Left cardiac atrium (tissue), 4 donors: ENCODE measurements at regions of chr19 and their contacts with region 1.

Region 1: GRCh38 chr19:54325194-54325621 is 12.2 kb upstream of the LILRA5 start:
- DNase-seq: no peak
- ATAC-seq: peak in 1 of 2 donors; percentile 39

Region 2: GRCh38 chr19:54179921-54180461 is 145.2 kb before region 1 on chr19:
- intact Hi-C with region 1: no loop called
- DNase-seq: no peak
- ATAC-seq: peak in 1 of 2 donors; percentile 14

Region 3: GRCh38 chr19:54281007-54281728 is 44.0 kb before region 1 on chr19 and contains the start of gene LILRB2:
- intact Hi-C with region 1: no loop called
- DNase-seq: no peak
- ATAC-seq: peak in 1 of 2 donors; percentile 34
- total RNA-seq, gene LILRB2: 3.3 to 5.5 TPM

Region 4: DNA sequence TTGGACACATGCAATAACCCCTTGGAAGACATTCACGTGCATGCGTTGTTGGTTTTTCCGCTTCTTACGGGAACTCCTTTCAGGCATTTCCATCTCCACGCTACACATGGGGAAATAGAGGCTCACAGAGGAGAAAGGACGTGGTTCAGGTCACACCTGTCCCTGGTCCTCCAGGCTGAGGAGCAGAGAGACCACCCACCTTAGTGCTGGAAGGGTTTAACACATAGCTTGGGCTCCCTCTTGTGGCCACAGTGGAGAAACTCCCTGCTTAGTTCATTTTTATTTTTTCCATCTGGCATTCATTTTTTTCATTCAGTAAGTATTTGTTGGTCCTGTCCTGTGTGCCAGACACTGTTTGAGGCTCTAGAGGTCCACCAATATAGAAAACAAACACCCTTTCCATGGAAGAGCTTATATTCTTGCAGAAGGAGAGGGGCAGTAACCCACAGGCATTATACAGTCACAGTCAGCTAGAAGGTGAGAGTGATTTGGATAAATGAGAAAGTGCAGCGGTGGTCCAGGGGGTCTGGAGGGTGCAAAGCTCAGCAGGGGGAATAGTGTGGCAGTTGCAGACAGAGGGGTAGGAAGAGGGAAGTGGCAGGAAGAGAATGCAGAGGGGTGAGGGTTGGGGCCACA is 65.9 kb after region 1 on chr19:
- intact Hi-C with region 1: loop called in 1 of 2 experiments (anchors 10 kb)
- DNase-seq: peak; percentile 44
- ATAC-seq: peak in 1 of 2 donors; percentile 38